Right ventricle myocardium inferior (tissue), 1 donor: ENCODE measurements at regions of chr2 and their contacts with region 1.

Region 1: GRCh38 chr2:189762551-189763298 is at the start of gene OSGEPL1:
- DNase-seq: peak; percentile 96
- ATAC-seq: peak; percentile 97
- total RNA-seq, gene OSGEPL1: 8.7 TPM

Region 2: GRCh38 chr2:189674374-189675112 is 88.2 kb before region 1 on chr2 and contains the start of gene ANKAR:
- intact Hi-C with region 1: loop called (anchors 2 kb)
- DNase-seq: peak; percentile 96
- ATAC-seq: peak; percentile 99
- total RNA-seq, gene ANKAR: 6.0 TPM

Region 3: GRCh38 chr2:189783927-189784867 is 21.5 kb after region 1 on chr2 and contains the starts of genes ORMDL1 and PMS1:
- intact Hi-C with region 1: loop called (anchors 1 kb)
- DNase-seq: peak; percentile 99
- ATAC-seq: peak; percentile 99
- total RNA-seq, gene ORMDL1: 21.9 TPM
- total RNA-seq, gene PMS1: 15.1 TPM